Posterior vena cava (tissue), 2 donors: ENCODE measurements at regions of chr5 and their contacts with region 1.

Region 1: GRCh38 chr5:180784497-180785097 is 18.0 kb downstream of the MGAT1 start:
- DNase-seq: peak; percentile 93

Region 2: DNA sequence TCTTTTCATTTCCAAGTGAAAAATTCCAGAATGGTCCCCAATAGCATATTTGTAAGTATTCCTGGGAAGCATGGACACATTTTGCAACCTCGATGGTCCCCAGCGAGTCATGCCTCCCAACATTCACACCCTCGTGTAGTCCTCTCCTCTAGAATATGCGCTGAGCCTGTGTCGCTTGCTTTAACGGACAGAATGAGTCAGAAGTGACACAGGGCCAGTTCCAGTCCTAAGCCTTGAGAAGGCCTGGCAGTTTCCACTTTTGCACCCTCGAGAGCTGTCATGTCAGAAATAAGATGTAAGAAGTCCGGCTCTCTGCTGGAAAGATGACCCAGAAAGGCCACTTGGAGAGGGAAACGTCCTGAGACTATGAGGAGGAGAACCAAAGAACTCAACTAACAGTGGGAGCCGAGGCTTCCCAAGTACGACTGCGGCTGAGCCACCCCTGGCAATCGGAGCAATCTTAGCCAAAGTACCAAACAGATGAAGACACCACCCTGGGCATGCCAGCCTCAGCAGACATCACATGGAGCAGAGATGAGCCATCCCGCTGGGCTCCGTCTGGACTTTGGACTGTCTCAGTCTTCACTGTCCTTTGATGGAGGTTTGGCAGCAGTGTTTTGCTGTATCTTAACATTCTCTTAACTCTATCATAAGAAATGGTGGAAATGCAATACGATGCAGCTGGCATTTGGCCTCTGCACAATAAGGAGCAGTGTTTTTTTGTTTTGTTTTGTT is 388.9 kb before region 1 on chr5:
- intact Hi-C with region 1: no loop called
- DNase-seq: peak; percentile 82

Region 3: DNA sequence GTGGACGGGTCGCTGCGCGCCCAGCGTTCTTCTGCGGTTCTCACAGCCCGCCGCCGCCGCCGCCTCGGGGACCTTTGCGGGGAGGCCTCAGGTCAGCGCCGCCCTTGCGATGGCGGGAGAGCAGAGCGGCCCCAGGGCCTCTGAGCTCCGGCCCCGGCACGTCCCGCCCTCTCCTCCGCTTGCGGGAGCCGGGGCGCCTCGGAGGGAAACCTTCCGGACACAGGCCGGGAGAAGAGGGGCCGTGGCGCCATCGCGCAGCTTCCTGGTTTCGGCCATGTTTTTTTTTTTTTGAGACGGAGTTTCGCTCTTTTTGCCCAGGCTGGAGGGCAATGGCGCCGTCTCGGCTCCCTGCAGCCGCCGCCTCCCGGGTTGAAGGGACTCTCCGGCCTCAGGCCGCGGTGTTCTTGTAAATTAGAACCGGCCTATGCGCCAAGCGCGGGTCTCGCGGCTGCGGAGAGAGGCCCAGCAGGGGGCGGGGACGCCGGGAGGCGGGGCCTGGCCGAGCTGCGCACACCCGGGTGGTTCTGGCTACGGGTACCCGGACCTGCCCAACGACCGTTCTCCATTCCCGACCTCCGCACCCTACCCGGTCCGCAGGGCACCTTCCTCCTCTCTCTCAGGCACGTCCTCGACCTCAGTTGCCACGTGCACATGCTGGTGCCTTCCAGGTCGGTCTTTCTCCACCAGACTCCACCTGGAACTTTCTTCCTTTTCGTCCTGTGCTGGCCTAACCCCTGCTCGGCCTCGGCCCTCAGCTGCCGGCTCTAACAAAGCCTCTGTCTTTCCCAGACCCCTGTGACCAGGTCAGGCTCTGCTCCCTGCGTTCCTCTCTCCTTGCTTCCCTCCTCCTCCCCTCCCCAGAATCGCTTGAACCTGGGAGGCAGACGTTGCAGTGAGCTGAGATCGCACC is 46.8 kb after region 1 on chr5:
- intact Hi-C with region 1: loop called in 1 of 2 experiments (anchors 10 kb)
- DNase-seq: peak; percentile 95

Region 4: GRCh38 chr5:180860887-180861822 is 76.6 kb after region 1 on chr5 and contains the start of gene ZFP62:
- intact Hi-C with region 1: loop called in 1 of 2 experiments (anchors 10 kb)
- DNase-seq: peak; percentile 97
- total RNA-seq, gene ZFP62: 21.2 to 22.2 TPM

Region 5: DNA sequence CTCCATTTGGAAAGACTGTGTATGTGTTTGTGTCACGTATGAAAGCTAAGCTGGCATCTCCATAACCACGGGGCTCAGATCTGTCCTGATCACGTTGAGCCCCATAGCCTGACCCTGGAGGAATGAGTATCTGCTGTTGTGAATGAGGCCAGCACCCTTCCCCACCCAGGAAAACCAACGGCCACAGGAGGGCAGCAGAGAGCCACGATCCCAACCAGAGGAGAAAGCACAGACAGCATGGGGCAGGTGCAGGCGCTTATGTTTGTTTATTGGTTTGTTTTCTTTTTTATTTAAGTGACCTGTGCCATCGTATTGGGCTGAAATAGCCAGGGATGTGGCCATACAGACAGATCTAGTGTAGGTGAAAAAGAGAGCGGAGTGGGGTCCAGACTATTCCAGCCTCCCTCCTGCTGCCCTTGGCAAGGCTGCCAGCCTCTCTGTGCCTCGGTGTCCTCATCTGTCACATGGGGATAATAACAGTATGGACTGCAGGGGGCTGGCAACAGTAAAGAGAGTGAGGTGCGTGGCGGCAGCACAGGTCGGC is 374.8 kb after region 1 on chr5:
- intact Hi-C with region 1: loop called in 1 of 2 experiments (anchors 10 kb)
- DNase-seq: peak; percentile 94